OCI-LY7 (cell line): ENCODE measurements at regions of chr12 and their contacts with region 1.

Region 1: DNA sequence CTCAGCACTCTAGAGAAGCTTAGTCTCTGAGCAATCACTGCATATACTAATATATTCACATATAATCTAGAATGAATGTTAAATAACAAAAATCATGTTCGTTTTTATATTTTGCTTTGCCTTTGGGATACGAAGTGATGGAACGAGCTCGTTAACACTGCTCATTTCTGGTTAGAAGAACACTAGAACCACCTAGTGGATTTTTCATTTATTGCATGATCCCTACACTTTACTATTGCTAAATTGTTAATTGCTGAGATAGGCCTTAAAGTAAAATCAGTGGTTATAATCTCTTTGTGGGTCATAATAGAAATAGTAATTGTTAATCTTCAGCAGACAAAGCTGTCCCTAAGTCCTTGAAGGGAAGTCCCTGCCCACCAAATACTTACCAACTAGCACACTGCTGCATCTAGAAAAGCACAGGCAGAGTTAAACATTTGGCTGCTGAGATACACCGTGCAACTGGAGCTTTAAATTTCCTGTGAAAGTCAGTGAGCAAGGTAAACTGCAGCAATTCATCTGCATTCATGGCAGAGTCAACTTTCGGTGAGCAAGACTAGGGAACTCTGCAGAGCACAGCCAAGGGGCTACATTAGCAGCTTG is 353.7 kb downstream of the APAF1 start:
- DNase-seq: peak; percentile 65
- H3K4me3 ChIP-seq: no peak overlapping the region
- H3K27ac ChIP-seq: no peak overlapping the region
- H3K4me1 ChIP-seq: no peaks in the 10 kb centered on the region
- CTCF ChIP-seq: peak; percentile 91

Region 2: DNA sequence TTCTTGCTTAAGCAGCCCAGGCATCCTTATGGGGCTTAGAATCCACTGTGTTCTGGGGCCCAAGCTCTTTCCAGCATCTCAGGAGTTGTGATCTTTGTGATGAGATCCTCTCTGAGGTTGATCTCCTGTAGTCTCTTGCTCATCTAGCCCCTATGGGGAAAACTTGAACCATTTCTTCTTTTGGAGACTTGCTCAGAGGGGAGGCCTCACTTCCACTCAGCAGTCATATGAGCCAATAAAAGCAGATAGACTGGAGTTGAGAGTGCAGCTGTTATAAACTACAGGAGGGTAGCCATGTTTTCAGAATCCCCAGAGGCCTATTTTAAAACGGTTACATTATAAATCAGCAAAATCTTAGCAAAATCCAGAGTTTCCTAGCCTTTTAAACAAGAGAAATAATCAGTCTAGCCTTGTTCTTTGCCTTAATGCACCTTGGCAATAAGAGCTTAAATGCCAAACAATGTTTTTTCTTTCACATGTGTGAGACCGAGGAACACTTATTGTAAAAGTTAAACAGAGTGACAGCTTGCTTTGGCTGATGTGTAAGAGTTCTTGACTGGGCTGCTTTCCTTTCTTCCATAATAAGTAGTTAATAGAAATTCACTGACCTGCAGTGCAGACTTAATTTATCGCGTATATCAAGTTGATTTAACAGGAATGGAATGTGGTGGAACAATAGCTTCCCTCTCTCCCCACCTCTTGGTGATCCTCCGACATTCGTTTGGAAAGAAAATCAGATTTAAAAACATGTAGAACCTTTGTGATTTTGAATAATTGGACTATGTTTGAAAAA is 1923.4 kb before region 1 on chr12:
- CTCF ChIA-PET with region 1: no interaction called
- POLR2A ChIA-PET with region 1: no interaction called
- intact Hi-C with region 1: no loop called
- DNase-seq: no peak
- H3K4me3 ChIP-seq: no peak overlapping the region
- H3K27ac ChIP-seq: no peak overlapping the region
- H3K4me1 ChIP-seq: no peaks in the 10 kb centered on the region
- CTCF ChIP-seq: no peak

Region 3: DNA sequence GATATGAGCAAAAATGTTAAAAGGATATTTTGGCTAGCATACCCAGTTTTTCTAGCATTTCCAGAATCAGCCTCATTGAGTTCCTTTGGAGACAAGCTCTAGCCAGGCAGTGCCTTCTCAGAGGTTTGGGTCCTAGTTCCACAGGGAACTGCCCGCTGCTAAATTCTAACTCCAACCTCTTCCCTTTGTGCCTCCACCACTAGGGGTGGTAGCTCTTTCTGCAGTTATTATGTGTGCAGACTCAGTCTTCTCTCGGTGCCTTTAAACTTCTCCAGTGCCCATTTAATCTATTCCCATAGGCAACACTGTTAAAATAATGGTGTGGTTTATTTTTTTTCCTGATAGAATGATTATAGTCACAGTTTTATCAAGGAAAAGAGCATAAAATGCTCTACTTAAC is 426.8 kb before region 1 on chr12:
- CTCF ChIA-PET with region 1: no interaction called
- POLR2A ChIA-PET with region 1: no interaction called
- intact Hi-C with region 1: loop called (anchors 5 kb)
- DNase-seq: peak; percentile 28
- H3K4me3 ChIP-seq: no peak overlapping the region
- H3K27ac ChIP-seq: no peak overlapping the region
- H3K4me1 ChIP-seq: no peaks in the 10 kb centered on the region
- CTCF ChIP-seq: peak; percentile 74

Region 4: GRCh38 chr12:98698603-98699463 is 300.0 kb before region 1 on chr12:
- CTCF ChIA-PET with region 1: no interaction called
- POLR2A ChIA-PET with region 1: no interaction called
- intact Hi-C with region 1: loop called (anchors 2 kb)
- DNase-seq: peak; percentile 68
- H3K4me3 ChIP-seq: no peak overlapping the region
- H3K27ac ChIP-seq: no peak overlapping the region
- H3K4me1 ChIP-seq: no peaks in the 10 kb centered on the region
- CTCF ChIP-seq: peak; percentile 83

Region 5: GRCh38 chr12:98725476-98726247 is 273.1 kb before region 1 on chr12:
- CTCF ChIA-PET with region 1: no interaction called
- POLR2A ChIA-PET with region 1: no interaction called
- intact Hi-C with region 1: loop called (anchors 10 kb)
- DNase-seq: peak; percentile 56
- H3K4me3 ChIP-seq: no peak overlapping the region
- H3K27ac ChIP-seq: no peak overlapping the region
- H3K4me1 ChIP-seq: no peaks in the 10 kb centered on the region
- CTCF ChIP-seq: peak; percentile 82

Region 6: DNA sequence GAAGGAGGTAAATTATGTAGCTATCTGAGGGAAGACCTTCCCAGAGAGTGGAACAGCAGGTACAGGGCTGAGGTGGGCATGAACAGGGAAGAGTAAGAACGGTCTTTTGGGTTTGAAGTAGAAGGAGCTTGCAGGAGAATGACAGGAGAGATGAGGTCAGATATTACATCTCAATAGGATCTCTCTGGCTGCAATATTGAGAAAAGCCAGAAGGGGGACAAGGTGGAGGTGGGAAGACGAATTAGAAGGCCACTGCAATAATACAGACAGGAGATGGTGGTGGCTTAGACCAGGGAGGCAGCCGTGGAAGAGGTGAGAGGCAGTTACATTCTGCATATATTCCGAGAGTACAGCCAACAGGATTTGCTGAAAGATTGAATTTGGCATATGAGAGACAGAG is 43.5 kb before region 1 on chr12:
- CTCF ChIA-PET with region 1: no interaction called
- POLR2A ChIA-PET with region 1: interaction called, 5 read pairs
- intact Hi-C with region 1: loop called (anchors 5 kb)
- DNase-seq: peak; percentile 49
- H3K4me3 ChIP-seq: no peak overlapping the region
- H3K27ac ChIP-seq: no peak overlapping the region
- H3K4me1 ChIP-seq: no peaks in the 10 kb centered on the region
- CTCF ChIP-seq: peak; percentile 71

Region 7: DNA sequence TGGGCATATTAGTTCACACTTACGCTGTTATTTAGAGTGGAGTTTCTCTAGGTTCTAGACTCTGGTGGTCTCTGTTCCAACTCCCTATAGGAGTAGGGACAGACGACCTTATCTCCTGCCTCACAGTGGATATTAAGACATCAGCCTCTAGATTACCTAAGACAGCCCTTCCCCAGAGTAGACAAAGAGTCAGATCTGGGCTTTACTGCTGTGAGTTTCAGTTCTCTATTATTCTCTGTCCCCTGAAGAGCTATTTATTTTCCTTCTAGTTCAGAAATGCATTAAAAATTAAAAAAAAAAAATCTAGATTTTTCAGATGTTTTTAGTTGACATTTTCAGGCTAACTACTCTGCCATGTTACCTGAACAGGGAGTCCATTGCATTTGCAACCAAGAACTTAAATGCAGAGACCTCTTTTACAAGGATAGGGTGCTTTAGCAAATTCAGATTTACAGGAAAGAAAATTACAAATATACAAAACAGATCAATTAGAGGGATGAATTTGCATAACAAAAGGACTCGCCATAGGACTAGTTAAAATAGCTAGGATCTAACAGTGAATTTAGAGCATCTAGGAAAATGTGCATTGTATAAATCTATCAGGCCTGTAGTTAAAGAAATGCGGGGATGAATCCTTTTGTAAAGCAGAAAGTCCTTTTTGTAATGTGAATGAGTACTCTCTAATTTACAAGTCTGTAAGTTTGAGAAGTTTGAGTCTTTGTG is 27.7 kb after region 1 on chr12:
- CTCF ChIA-PET with region 1: no interaction called
- POLR2A ChIA-PET with region 1: no interaction called
- intact Hi-C with region 1: no loop called
- DNase-seq: peak; percentile 52
- H3K4me3 ChIP-seq: no peak overlapping the region
- H3K27ac ChIP-seq: no peak overlapping the region
- H3K4me1 ChIP-seq: peaks cover 10% of the 10 kb centered on the region
- CTCF ChIP-seq: no peak